B cell (primary cell): ENCODE measurements at regions of chr22 and their contacts with region 1.

Region 1: DNA sequence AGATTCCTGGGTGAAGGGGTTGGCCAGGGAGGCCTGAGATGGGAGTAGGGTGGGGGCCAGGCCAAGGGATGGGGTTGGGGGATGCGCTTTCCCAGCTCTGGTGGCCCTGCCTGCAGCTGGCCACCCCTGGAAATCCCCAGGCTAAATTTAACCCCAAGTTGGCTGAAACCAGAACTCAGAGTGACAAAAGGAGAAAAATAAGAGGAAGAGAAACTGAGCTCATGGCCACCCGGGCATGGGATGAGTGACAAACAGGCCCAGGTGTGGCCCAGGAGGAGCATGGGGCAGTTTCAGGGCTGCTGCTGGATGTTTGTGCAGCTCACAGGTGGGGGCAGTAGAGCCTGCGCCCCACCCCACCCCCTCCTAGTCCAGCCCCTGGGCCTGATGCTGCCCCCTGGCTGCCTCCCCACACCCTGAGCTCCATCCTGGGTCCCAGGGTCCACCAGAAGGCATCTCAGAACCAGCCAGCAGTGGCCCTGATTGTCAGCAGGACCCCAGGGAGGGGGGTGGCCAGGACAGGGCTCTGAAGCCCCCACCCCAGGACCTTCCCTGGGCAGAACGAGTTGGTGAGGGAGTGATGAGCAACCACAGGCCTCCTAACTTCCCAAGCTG is 48.0 kb downstream of the IGLL5 start:
- DNase-seq: peak; percentile 97
- ATAC-seq: peak; percentile 89
- H3K4me3 ChIP-seq: peak overlapping the region in 2 of 5 experiments; percentile 7 to 37
- H3K4me3 Mint-ChIP-seq: peak overlapping the region; percentile 71
- H3K27ac ChIP-seq: peak overlapping the region; percentile 94 to 99
- H3K27ac Mint-ChIP-seq: peak overlapping the region; percentile 95
- H3K4me1 ChIP-seq: peaks cover 98 to 100% of the 10 kb centered on the region in 2 donors
- H3K4me1 Mint-ChIP-seq: peaks cover 98% of the 10 kb centered on the region
- H3K27me3 ChIP-seq: no peaks in the 10 kb centered on the region
- H3K27me3 Mint-ChIP-seq: no peaks in the 10 kb centered on the region
- CTCF ChIP-seq: peak; percentile 75

Region 2: GRCh38 chr22:22168190-22168940 is 767.3 kb before region 1 on chr22:
- CTCF ChIA-PET with region 1: interaction called, 3 read pairs
- POLR2A ChIA-PET with region 1: interaction called, 3 read pairs
- intact Hi-C with region 1: loop called (anchors 5 kb)
- DNase-seq: peak; percentile 74
- ATAC-seq: peak; percentile 55
- H3K4me3 ChIP-seq: peak overlapping the region; percentile 20 to 59 (median 40)
- H3K4me3 Mint-ChIP-seq: peak overlapping the region; percentile 92
- H3K27ac ChIP-seq: peak overlapping the region; percentile 96 to 98
- H3K27ac Mint-ChIP-seq: peak overlapping the region; percentile 100
- H3K4me1 ChIP-seq: peaks cover 80 to 88% of the 10 kb centered on the region in 2 donors
- H3K4me1 Mint-ChIP-seq: peaks cover 81% of the 10 kb centered on the region
- H3K27me3 ChIP-seq: no peaks in the 10 kb centered on the region
- H3K27me3 Mint-ChIP-seq: no peaks in the 10 kb centered on the region
- CTCF ChIP-seq: no peak

Region 3: GRCh38 chr22:22371031-22371541 is 564.6 kb before region 1 on chr22:
- CTCF ChIA-PET with region 1: interaction called, 4 read pairs
- POLR2A ChIA-PET with region 1: no interaction called
- intact Hi-C with region 1: loop called (anchors 5 kb)
- DNase-seq: no peak
- ATAC-seq: no peak
- H3K4me3 ChIP-seq: no peak overlapping the region
- H3K4me3 Mint-ChIP-seq: peak overlapping the region; percentile 29
- H3K27ac ChIP-seq: no peak overlapping the region
- H3K27ac Mint-ChIP-seq: peak overlapping the region; percentile 64
- H3K4me1 ChIP-seq: peaks cover 73 to 76% of the 10 kb centered on the region in 2 donors
- H3K4me1 Mint-ChIP-seq: peaks cover 87% of the 10 kb centered on the region
- H3K27me3 ChIP-seq: no peaks in the 10 kb centered on the region
- H3K27me3 Mint-ChIP-seq: no peaks in the 10 kb centered on the region
- CTCF ChIP-seq: no peak

Region 4: DNA sequence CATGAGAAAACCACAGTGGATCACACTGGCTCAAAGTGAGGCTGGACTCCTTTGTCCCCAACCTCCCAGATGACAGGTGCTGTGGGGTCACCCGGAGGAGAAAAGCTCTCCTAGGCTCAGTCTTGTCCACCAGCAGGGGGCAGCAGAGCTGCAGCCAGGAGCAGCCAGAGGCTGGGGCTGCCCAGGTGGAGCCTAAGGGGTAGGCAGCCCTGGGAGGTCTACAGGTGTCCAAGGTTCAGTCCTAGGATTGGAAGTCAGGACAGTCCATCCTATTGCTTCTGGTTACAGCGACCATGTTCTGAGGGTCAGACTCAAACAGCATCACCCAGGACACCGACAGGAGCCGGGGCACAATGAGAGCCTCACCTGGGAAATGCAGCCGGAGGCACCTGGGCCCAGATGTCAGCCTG is 125.6 kb before region 1 on chr22:
- CTCF ChIA-PET with region 1: interaction called, 23 read pairs
- POLR2A ChIA-PET with region 1: interaction called, 4 read pairs
- intact Hi-C with region 1: no loop called
- DNase-seq: peak; percentile 84
- ATAC-seq: peak; percentile 76
- H3K4me3 ChIP-seq: peak overlapping the region in 1 of 5 experiments; percentile 1
- H3K4me3 Mint-ChIP-seq: no peak overlapping the region
- H3K27ac ChIP-seq: no peak overlapping the region
- H3K27ac Mint-ChIP-seq: no peak overlapping the region
- H3K4me1 ChIP-seq: peaks cover 9 to 26% of the 10 kb centered on the region in 2 donors
- H3K4me1 Mint-ChIP-seq: peaks cover 24% of the 10 kb centered on the region
- H3K27me3 ChIP-seq: peaks cover 0 to 9% (median 0%) of the 10 kb centered on the region in 4 experiments
- H3K27me3 Mint-ChIP-seq: peaks cover 12% of the 10 kb centered on the region
- CTCF ChIP-seq: peak; percentile 91

Region 5: GRCh38 chr22:22894740-22895731 is 40.6 kb before region 1 on chr22:
- CTCF ChIA-PET with region 1: interaction called, 5 read pairs
- POLR2A ChIA-PET with region 1: interaction called, 12 read pairs
- intact Hi-C with region 1: no loop called
- DNase-seq: no peak
- ATAC-seq: peak; percentile 26
- H3K4me3 ChIP-seq: peak overlapping the region; percentile 17 to 75 (median 52)
- H3K4me3 Mint-ChIP-seq: peak overlapping the region; percentile 65
- H3K27ac ChIP-seq: peak overlapping the region; percentile 57 to 61
- H3K27ac Mint-ChIP-seq: peak overlapping the region; percentile 84
- H3K4me1 ChIP-seq: peaks cover 64 to 80% of the 10 kb centered on the region in 2 donors
- H3K4me1 Mint-ChIP-seq: peaks cover 77% of the 10 kb centered on the region
- H3K27me3 ChIP-seq: peaks cover 0 to 8% (median 1%) of the 10 kb centered on the region in 4 experiments
- H3K27me3 Mint-ChIP-seq: peaks cover 22% of the 10 kb centered on the region
- CTCF ChIP-seq: no peak

Region 6: DNA sequence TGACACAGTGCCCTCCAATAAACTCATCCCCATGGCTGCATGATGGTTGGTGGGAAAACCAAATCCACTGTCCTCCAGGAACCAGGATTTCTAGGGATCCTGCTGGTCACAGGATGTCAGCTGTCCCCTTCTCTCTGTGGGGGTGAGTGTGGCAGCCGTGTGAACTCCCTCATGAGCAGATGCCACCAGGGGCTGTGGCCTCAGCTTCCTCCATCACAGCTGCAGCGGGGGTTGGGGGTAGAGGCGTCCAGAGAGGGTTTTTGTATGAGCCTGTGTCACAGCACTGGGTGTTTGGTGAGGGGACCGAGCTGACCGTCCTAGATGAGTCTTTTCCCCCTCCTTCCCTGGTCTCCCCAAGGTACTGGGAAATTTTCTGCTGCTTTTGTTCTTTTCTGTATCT is 21.7 kb before region 1 on chr22:
- CTCF ChIA-PET with region 1: interaction called, 10 read pairs
- POLR2A ChIA-PET with region 1: interaction called, 11 read pairs
- intact Hi-C with region 1: no loop called
- DNase-seq: peak; percentile 60
- ATAC-seq: peak; percentile 73
- H3K4me3 ChIP-seq: no peak overlapping the region
- H3K4me3 Mint-ChIP-seq: peak overlapping the region; percentile 55
- H3K27ac ChIP-seq: peak overlapping the region; percentile 65 to 77
- H3K27ac Mint-ChIP-seq: peak overlapping the region; percentile 76
- H3K4me1 ChIP-seq: peaks cover 57 to 83% of the 10 kb centered on the region in 2 donors
- H3K4me1 Mint-ChIP-seq: peaks cover 81% of the 10 kb centered on the region
- H3K27me3 ChIP-seq: no peaks in the 10 kb centered on the region
- H3K27me3 Mint-ChIP-seq: no peaks in the 10 kb centered on the region
- CTCF ChIP-seq: no peak

Region 7: DNA sequence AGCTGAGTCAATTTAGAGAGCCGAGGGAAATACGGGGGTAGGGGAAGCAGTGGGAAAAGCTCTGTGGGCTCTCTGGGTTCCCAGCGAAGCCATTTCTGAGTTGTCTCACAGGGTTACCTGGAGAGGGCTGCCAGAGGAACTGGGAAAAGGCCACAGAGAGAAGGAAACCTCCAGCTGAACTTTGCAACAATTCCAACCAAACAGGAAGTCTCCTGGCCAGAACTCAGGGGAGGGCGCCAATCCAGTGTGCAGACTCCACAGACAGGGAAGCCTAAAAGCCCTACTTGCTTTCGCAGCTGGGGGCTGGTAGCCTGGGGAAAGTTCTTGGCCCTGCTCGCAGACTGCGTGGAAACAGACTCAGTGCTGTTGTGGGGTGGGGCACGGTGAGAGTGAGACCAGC is 111.6 kb after region 1 on chr22:
- CTCF ChIA-PET with region 1: no interaction called
- POLR2A ChIA-PET with region 1: no interaction called
- intact Hi-C with region 1: no loop called
- DNase-seq: no peak
- ATAC-seq: no peak
- H3K4me3 ChIP-seq: no peak overlapping the region
- H3K4me3 Mint-ChIP-seq: no peak overlapping the region
- H3K27ac ChIP-seq: no peak overlapping the region
- H3K27ac Mint-ChIP-seq: no peak overlapping the region
- H3K4me1 ChIP-seq: no peaks in the 10 kb centered on the region
- H3K4me1 Mint-ChIP-seq: peaks cover 11% of the 10 kb centered on the region
- H3K27me3 ChIP-seq: no peaks in the 10 kb centered on the region
- H3K27me3 Mint-ChIP-seq: no peaks in the 10 kb centered on the region
- CTCF ChIP-seq: no peak